Gastrocnemius medialis (tissue), 4 donors: ENCODE measurements at regions of chr3 and their contacts with region 1.

Region 1: GRCh38 chr3:182837855-182838454 is 44.7 kb downstream of the ATP11B start:
- DNase-seq: no peak
- ATAC-seq: no peak
- H3K4me3 ChIP-seq: no peak overlapping the region
- H3K27ac ChIP-seq: no peak overlapping the region
- H3K4me1 ChIP-seq: no peaks in the 10 kb centered on the region
- H3K27me3 ChIP-seq: no peaks in the 10 kb centered on the region
- CTCF ChIP-seq: peak in 3 of 5 experiments; percentile 30 to 47 (median 43)
- POLR2A ChIP-seq: no peak

Region 2: GRCh38 chr3:182389071-182389815 is 448.7 kb before region 1 on chr3:
- in situ Hi-C with region 1: no loop called
- intact Hi-C with region 1: no loop called
- DNase-seq: no peak
- ATAC-seq: no peak
- H3K4me3 ChIP-seq: no peak overlapping the region
- H3K27ac ChIP-seq: no peak overlapping the region
- H3K4me1 ChIP-seq: no peaks in the 10 kb centered on the region
- H3K27me3 ChIP-seq: no peaks in the 10 kb centered on the region
- CTCF ChIP-seq: no peak
- POLR2A ChIP-seq: no peak

Region 3: GRCh38 chr3:182583545-182583944 is 254.4 kb before region 1 on chr3:
- in situ Hi-C with region 1: no loop called
- intact Hi-C with region 1: no loop called
- DNase-seq: no peak
- ATAC-seq: no peak
- H3K4me3 ChIP-seq: no peak overlapping the region
- H3K27ac ChIP-seq: no peak overlapping the region
- H3K4me1 ChIP-seq: no peaks in the 10 kb centered on the region
- H3K27me3 ChIP-seq: no peaks in the 10 kb centered on the region
- CTCF ChIP-seq: no peak
- POLR2A ChIP-seq: no peak

Region 4: GRCh38 chr3:182704926-182705325 is 133.0 kb before region 1 on chr3:
- in situ Hi-C with region 1: loop called (anchors 5 to 10 kb)
- intact Hi-C with region 1: no loop called
- DNase-seq: no peak
- ATAC-seq: no peak
- H3K4me3 ChIP-seq: no peak overlapping the region
- H3K27ac ChIP-seq: no peak overlapping the region
- H3K4me1 ChIP-seq: no peaks in the 10 kb centered on the region
- H3K27me3 ChIP-seq: no peaks in the 10 kb centered on the region
- CTCF ChIP-seq: no peak
- POLR2A ChIP-seq: no peak

Region 5: DNA sequence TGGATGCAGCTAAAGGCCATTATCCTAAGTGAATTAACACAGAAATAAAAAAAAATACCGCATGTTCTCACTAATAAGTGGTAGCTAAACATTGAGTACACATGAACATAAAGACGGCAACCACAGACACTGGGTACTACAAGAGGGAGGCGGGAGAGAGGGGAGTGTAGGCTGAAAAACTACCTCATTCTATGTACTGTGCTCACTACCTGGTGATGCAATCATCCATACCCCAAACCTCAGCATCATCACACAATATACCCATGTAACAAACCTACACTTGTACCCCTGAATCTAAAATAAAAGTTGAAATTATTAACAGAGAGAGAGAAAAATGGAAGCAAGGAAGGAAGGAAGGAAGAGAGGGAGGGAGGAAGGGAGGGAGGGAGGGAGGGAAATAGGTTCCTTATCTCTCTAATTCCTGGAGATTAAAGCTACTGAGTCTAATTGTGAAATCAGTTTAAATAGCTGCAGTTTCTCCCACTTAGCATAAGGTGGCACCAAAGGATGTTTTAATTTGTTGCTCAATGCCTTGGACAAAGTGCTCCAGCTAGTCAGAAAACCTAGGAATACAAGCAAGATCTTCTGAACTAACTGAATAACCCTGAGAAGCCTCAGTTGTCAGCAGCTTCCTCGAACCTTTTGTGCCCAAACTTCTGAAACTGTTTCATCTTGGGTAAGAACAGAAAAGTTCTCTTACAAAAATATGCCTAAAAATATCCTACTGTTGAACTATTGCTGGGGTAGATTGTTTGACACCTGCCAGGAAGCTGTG is 124.0 kb before region 1 on chr3:
- in situ Hi-C with region 1: loop called (anchors 5 to 10 kb)
- intact Hi-C with region 1: loop called (anchors 1 kb)
- DNase-seq: no peak
- ATAC-seq: peak; percentile 85 to 93
- H3K4me3 ChIP-seq: no peak overlapping the region
- H3K27ac ChIP-seq: no peak overlapping the region
- H3K4me1 ChIP-seq: no peaks in the 10 kb centered on the region
- H3K27me3 ChIP-seq: no peaks in the 10 kb centered on the region
- CTCF ChIP-seq: peak in 4 of 5 experiments; percentile 48 to 63 (median 56)
- POLR2A ChIP-seq: no peak